ENCODE measurements at regions of chr19 and their contacts with region 1.

Region 1: GRCh38 chr19:45016388-45017319 is 15.4 kb downstream of the RELB start:
- DNase-seq: peak; percentile 99
- H3K4me3 ChIP-seq: peak overlapping the region; percentile 44
- H3K27ac ChIP-seq: peak overlapping the region; percentile 100
- H3K4me1 ChIP-seq: peaks cover 66% of the 10 kb centered on the region
- CTCF ChIP-seq: peak; percentile 91

Region 2: GRCh38 chr19:45001087-45001739 is 15.4 kb before region 1 on chr19 and contains the start of gene RELB:
- CTCF ChIA-PET with region 1: no interaction called
- POLR2A ChIA-PET with region 1: interaction called, 6 read pairs
- intact Hi-C with region 1: loop called (anchors 1 kb)
- DNase-seq: peak; percentile 95
- H3K4me3 ChIP-seq: peak within 1 kb of the TSS; percentile 94
- H3K27ac ChIP-seq: peak within 1 kb of the TSS; percentile 96
- H3K4me1 ChIP-seq: peaks cover 67% of the 10 kb centered on the region
- CTCF ChIP-seq: no peak
- total RNA-seq, gene RELB: 36.4 and 36.9 TPM in 2 replicates

Region 3: GRCh38 chr19:45047188-45047797 is 30.6 kb after region 1 on chr19:
- CTCF ChIA-PET with region 1: no interaction called
- POLR2A ChIA-PET with region 1: interaction called, 4 read pairs
- intact Hi-C with region 1: loop called (anchors 2 kb)
- DNase-seq: peak; percentile 76
- H3K4me3 ChIP-seq: peak overlapping the region; percentile 60
- H3K27ac ChIP-seq: peak overlapping the region; percentile 88
- H3K4me1 ChIP-seq: peaks cover 73% of the 10 kb centered on the region
- CTCF ChIP-seq: peak; percentile 49

Region 4: GRCh38 chr19:45079063-45079910 is 62.6 kb after region 1 on chr19 and contains the start of gene GEMIN7:
- CTCF ChIA-PET with region 1: no interaction called
- POLR2A ChIA-PET with region 1: no interaction called
- intact Hi-C with region 1: loop called (anchors 2 kb)
- DNase-seq: peak; percentile 90
- H3K4me3 ChIP-seq: peak within 1 kb of the TSS; percentile 97
- H3K27ac ChIP-seq: peak within 1 kb of the TSS; percentile 88
- H3K4me1 ChIP-seq: peaks cover 43% of the 10 kb centered on the region
- CTCF ChIP-seq: no peak
- total RNA-seq, gene GEMIN7: 45.2 and 60.0 TPM in 2 replicates

Measured in OCI-LY7 (cell line).